ENCODE measurements at regions of chr11 and their contacts with region 1.

Region 1: GRCh38 chr11:75577207-75577606 is 15.2 kb downstream of the SERPINH1 start:
- DNase-seq: peak; percentile 73
- H3K4me3 Mint-ChIP-seq: no peak overlapping the region
- H3K27ac Mint-ChIP-seq: no peak overlapping the region
- H3K4me1 Mint-ChIP-seq: peaks cover 17% of the 10 kb centered on the region
- H3K27me3 Mint-ChIP-seq: peaks cover 26% of the 10 kb centered on the region

Region 2: GRCh38 chr11:75547580-75548058 is 29.6 kb before region 1 on chr11:
- CTCF ChIA-PET with region 1: interaction called, 16 read pairs
- DNase-seq: peak; percentile 45
- H3K4me3 Mint-ChIP-seq: no peak overlapping the region
- H3K27ac Mint-ChIP-seq: no peak overlapping the region
- H3K4me1 Mint-ChIP-seq: peaks cover 2% of the 10 kb centered on the region
- H3K27me3 Mint-ChIP-seq: peaks cover 43% of the 10 kb centered on the region

Region 3: GRCh38 chr11:75563978-75564552 is 13.1 kb before region 1 on chr11:
- CTCF ChIA-PET with region 1: interaction called, 20 read pairs
- DNase-seq: no peak
- H3K4me3 Mint-ChIP-seq: peak overlapping the region; percentile 98
- H3K27ac Mint-ChIP-seq: no peak overlapping the region
- H3K4me1 Mint-ChIP-seq: peaks cover 42% of the 10 kb centered on the region
- H3K27me3 Mint-ChIP-seq: peaks cover 8% of the 10 kb centered on the region